Esophagus muscularis mucosa (tissue), 4 donors: ENCODE measurements at regions of chr12 and their contacts with region 1.

Region 1: GRCh38 chr12:56127888-56128669 is at the start of gene ESYT1:
- DNase-seq: peak; percentile 100
- H3K4me3 ChIP-seq: peak within 1 kb of the TSS; percentile 78 to 91 (median 87)
- H3K27ac ChIP-seq: peak within 1 kb of the TSS; percentile 94 to 98 (median 98)
- H3K4me1 ChIP-seq: peaks cover 40 to 60% (median 52%) of the 10 kb centered on the region in 4 donors
- H3K27me3 ChIP-seq: no peaks in the 10 kb centered on the region
- CTCF ChIP-seq: peak in 1 of 3 experiments; percentile 13
- EP300 ChIP-seq: no peak
- POLR2A ChIP-seq: peak; percentile 96
- total RNA-seq, gene ESYT1: 151 to 245 (median 214) TPM

Region 2: DNA sequence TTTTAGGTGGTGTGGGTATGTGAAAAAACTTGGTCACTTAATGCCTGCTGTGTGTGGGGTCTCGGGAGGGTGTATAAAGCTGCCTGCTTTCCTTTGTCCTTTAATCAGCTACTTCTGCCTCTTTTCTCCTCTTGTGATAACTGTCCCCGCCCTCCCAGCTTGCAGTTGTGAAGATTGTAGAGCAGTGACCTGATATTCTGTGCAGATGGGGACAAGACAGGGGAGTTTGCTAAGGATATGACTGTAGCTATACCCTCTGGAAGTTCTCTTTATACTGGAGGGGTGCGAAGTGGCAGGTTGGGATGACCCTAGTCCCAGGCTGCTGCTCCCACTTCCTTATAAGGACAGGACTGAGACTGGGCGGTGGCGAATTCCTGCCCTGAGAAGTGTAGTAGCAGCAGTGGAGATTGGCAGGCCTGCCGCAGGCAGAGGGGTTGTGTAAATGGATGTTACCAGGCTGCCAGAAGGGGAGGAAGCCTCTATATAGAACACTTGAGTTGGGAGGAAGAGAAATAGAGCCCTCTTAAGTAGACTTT is 30.9 kb after region 1 on chr12:
- intact Hi-C with region 1: loop called (anchors 1 kb)
- DNase-seq: peak; percentile 96
- H3K4me3 ChIP-seq: peak overlapping the region; percentile 66 to 98 (median 86)
- H3K27ac ChIP-seq: peak overlapping the region; percentile 93 to 98 (median 96)
- H3K4me1 ChIP-seq: peaks cover 35 to 64% (median 61%) of the 10 kb centered on the region in 4 donors
- H3K27me3 ChIP-seq: no peaks in the 10 kb centered on the region
- CTCF ChIP-seq: no peak
- EP300 ChIP-seq: no peak
- POLR2A ChIP-seq: peak; percentile 37

Region 3: GRCh38 chr12:56230432-56231183 is 102.5 kb after region 1 on chr12:
- intact Hi-C with region 1: no loop called
- DNase-seq: no peak
- H3K4me3 ChIP-seq: no peak overlapping the region
- H3K27ac ChIP-seq: no peak overlapping the region
- H3K4me1 ChIP-seq: peaks cover 0 to 4% (median 0%) of the 10 kb centered on the region in 4 donors
- H3K27me3 ChIP-seq: no peaks in the 10 kb centered on the region
- CTCF ChIP-seq: no peak
- EP300 ChIP-seq: no peak
- POLR2A ChIP-seq: no peak

Region 4: GRCh38 chr12:56258057-56258819 is 130.2 kb after region 1 on chr12 and contains the start of gene ANKRD52:
- intact Hi-C with region 1: no loop called
- DNase-seq: no peak
- H3K4me3 ChIP-seq: peak within 1 kb of the TSS; percentile 81 to 93 (median 93)
- H3K27ac ChIP-seq: peak within 1 kb of the TSS; percentile 91 to 94 (median 93)
- H3K4me1 ChIP-seq: peaks cover 21 to 33% (median 30%) of the 10 kb centered on the region in 4 donors
- H3K27me3 ChIP-seq: no peaks in the 10 kb centered on the region
- CTCF ChIP-seq: peak; percentile 77 to 89 (median 86)
- EP300 ChIP-seq: no peak
- POLR2A ChIP-seq: no peak
- total RNA-seq, gene ANKRD52: 13.8 to 31.5 (median 19.6) TPM

Region 5: DNA sequence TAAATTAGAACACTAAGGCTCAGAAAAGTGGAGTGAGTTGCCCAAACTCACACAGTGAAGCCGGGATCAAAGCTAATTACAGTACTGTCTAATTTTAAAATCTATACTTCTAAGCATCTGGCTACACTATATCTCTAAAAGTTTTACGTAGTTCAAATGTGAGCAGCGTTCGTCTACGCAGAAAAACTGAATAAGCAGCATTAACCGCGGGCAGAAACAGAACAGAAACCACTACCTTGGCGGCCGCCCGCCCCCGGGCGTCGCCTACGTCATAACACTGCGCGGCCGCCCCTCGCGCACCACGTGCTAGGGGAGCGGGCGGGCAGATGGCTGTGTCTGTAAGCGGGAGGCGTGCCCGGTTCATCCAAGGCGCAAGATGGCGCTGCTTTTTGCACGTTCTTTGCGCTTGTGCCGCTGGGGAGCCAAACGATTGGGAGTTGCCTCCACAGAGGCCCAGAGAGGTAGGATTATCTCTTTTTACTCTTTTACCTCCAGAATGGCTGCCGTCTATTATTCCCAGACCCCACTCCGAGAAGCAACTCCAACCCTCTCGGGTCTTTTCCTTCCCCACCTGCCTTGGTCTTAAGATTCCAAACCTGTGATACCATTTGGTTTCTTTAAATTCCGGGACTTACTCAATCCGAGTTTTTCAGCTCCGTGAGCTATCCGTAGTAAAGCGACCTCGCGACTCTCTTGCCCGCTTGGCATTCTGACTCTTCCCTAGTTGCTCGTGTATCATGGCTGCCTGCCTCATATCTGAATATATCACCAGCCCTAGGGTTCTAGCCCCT is 340.3 kb after region 1 on chr12 and contains the start of gene SPRYD4:
- intact Hi-C with region 1: loop called (anchors 10 kb)
- DNase-seq: peak; percentile 98
- H3K4me3 ChIP-seq: peak within 1 kb of the TSS; percentile 69 to 88 (median 79)
- H3K27ac ChIP-seq: peak within 1 kb of the TSS; percentile 82 to 92 (median 84)
- H3K4me1 ChIP-seq: peaks cover 11 to 43% (median 28%) of the 10 kb centered on the region in 4 donors
- H3K27me3 ChIP-seq: no peaks in the 10 kb centered on the region
- CTCF ChIP-seq: peak; percentile 20 to 61 (median 50)
- EP300 ChIP-seq: no peak
- POLR2A ChIP-seq: peak; percentile 65
- total RNA-seq, gene SPRYD4: 1.4 to 2.2 (median 1.9) TPM